T47D (cell line): ENCODE measurements at regions of chr9 and their contacts with region 1.

Region 1: GRCh38 chr9:135085830-135086546 is 1.5 kb upstream of the OLFM1 start:
- DNase-seq: peak; percentile 90 to 93

Region 2: DNA sequence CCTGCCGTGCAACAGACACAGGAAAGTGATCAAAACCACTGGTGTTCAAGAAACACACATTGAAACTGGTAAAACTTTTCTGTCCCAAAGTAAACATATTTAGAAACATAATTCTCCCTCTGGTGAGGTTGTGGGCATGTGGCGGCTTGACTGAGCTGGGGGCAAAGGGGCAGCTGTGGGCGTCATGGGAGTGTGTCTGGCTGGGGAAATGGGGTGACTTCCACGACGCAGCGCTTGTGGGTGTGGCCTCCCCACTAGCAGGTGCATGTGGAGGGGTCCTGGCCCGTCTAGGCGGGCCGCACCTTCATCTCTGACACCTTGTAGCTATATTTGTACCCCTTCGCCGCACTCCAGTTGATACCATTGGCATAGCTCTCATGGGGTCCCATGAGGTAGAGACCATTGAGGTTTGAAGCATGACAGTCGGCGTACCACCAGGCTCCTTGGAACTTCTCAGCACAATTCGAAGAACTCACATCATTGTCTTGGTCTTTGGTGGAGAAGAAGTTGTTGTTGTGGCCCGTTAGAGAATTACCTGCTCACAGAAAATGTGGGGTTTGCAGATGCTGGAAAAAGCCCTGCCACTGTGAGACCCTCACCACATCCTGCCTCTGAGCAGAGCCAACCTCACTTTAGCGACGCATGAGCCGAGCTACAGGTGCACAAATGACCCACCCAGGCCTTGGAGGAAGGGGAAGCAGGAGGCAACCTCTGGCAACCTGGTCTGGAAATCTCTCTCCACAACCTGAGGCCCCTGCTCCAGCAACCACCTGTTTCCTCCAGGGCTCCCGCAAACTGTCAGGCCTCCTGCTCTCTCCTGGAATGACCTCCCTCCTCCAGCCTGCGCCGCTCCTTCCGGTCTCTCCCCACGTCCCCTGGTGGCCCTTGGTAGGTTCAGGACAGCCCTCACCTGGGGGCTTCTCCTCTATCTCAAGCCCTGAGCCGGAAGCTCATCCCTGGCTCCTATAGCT is 176.2 kb before region 1 on chr9:
- in situ Hi-C with region 1: no loop called
- DNase-seq: no peak

Region 3: DNA sequence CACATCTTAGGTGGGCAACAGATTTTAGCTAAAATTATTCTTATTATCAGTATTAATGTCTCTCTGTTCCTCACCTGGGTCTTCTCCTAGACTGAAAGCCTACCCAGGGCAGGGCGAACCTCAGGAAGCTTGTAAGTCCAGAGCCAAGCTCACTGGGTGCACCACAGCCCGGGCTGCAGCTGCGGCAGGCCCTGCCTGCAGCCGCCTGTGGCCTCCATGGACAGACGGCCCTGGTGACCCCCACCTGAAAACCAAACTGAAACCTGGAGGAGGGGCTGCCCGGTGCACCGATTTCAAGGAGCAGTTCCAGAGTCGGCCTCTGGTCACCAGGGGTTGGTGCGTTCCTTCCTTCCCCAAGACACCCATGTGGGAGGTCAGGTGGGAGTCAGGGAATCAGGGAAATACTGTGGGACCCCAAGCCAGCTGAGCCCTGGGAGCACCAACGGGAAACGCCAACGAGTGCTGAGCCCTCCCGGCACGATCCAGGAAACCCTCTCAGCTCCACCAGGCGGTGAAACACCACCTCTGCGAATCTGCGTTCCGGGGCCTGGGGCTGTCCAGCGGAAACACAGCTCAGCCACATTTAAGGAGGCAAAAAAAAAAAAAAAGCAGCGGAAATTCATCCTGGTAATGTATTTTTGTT is 325.0 kb after region 1 on chr9:
- in situ Hi-C with region 1: loop called (anchors 25 kb)
- DNase-seq: no peak